Left cardiac atrium (tissue), 4 donors: ENCODE measurements at regions of chr5 and their contacts with region 1.

Region 1: GRCh38 chr5:159915904-159916840 is at the start of gene ADRA1B:
- DNase-seq: peak; percentile 77
- ATAC-seq: peak; percentile 89 to 92
- total RNA-seq, gene ADRA1B: 1.8 to 2.9 TPM

Region 2: GRCh38 chr5:159515909-159516415 is 400.2 kb before region 1 on chr5:
- intact Hi-C with region 1: loop called in 1 of 2 experiments (anchors 10 kb)
- DNase-seq: peak; percentile 64
- ATAC-seq: peak; percentile 61 to 77

Region 3: GRCh38 chr5:159531554-159532105 is 384.5 kb before region 1 on chr5:
- intact Hi-C with region 1: loop called in 1 of 2 experiments (anchors 5 kb)
- DNase-seq: no peak
- ATAC-seq: no peak

Region 4: DNA sequence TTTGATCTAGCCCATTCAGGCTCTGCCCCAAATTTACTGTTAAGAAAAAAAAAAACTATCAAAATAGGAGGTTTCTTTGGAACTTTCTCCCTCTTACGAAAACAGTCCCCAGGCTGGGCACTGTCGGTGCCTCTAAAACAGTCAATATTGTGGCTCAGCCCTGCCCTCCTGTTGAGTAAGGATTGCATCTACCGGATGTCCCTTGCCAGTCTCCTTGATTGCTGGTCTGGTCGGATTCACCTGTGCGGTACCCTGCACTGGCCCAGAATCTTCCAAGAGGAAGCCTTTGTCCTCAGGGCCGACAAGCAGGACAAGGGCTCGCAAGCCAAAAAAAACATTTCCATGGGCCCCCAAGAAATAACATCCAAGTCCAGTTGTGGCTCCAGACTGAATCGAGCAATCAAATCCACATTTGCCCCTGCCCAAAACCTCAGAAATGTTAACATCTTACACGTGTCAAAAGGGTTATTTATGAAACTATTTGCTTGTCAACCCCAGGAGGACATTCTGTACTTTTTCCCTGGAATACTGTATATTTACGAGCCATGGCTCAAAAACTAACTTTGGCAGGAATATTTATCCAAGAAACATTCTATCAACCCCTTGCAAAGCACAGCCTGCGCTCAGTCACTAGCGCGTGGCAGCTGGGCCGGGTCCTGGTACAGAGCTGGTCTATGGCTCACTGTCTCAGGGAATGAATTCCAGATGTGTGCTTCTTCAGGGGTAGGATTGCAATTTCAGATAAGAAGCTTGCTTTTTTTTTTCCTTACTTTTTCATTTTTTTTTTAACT is 129.1 kb before region 1 on chr5:
- intact Hi-C with region 1: loop called in 1 of 2 experiments (anchors 10 kb)
- DNase-seq: no peak
- ATAC-seq: peak; percentile 83 to 84

Region 5: DNA sequence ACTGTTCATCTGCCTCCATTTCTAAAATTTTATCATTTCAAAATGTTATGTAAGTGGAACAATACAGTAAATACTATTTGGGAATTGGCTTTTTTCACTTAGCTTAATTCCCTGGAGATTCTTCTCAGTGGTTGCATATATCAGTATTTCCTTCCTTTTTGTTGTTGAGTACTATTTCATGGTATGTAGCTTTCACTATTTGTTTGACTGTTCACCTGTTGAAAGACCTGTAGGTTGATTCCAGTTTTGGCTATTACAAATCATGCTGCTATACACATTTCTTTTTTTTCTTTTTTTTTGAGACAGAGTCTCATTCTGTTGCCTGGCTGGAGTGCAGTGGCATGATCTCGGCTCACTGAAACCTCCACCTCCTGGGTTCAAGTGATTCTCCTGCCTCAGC is 236.1 kb after region 1 on chr5:
- intact Hi-C with region 1: no loop called
- DNase-seq: no peak
- ATAC-seq: no peak

Region 6: DNA sequence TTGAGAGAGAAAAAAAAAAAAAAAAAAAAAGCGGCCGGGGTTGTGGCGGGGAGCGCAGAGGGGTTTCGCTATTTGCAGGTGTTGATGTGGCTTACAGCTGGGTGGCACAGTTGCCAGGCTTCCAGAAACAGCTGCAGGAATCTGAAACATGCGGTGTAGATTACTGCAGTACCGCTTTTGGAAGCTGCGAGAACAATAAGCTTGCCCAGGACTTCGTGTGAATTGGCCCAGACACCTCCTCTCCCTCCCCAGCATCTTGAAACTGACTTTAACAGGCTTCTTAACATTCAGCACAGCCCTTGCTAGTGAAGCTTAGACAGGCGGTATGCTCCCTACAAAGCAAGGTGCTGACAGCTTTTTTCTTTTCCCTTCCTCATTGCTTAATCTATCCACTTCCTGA is 831.8 kb after region 1 on chr5:
- intact Hi-C with region 1: no loop called
- DNase-seq: no peak
- ATAC-seq: peak in 1 of 2 donors; percentile 63